BJ (cell line): ENCODE measurements at regions of chr12 and their contacts with region 1.

Region 1: GRCh38 chr12:49974231-49974675 is 1.5 kb downstream of the AQP6 start:
- DNase-seq: no peak
- H3K4me3 ChIP-seq: no peak overlapping the region
- H3K27me3 ChIP-seq: peaks cover 14% of the 10 kb centered on the region
- CTCF ChIP-seq: peak; percentile 76

Region 2: GRCh38 chr12:49959570-49960465 is 14.4 kb before region 1 on chr12:
- CTCF ChIA-PET with region 1: interaction called, 18 read pairs
- POLR2A ChIA-PET with region 1: no interaction called
- DNase-seq: no peak
- H3K4me3 ChIP-seq: no peak overlapping the region
- H3K27me3 ChIP-seq: peaks cover 54% of the 10 kb centered on the region
- CTCF ChIP-seq: no peak